GM12878 (cell line): ENCODE measurements at regions of chr6 and their contacts with region 1.

Region 1: DNA sequence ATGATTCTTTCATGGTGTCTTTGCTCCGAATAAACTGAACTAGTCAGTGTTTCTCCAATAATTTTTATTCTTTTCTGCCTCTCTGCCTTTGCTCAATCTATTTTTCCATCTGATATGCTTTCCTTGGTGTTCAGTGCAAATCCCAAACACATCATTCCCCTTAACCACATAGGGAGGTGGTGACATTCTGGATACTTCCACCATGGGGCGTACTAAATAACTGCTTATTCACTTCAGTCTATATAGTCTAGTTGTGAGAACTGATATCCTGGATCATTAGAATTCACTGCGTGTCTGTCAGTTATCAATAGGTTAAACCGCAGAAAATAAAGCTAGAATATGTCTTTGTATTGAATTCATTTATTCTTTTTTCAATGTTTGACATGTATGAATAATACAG is 83.1 kb downstream of the KCNQ5 start:
- DNase-seq: no peak
- ATAC-seq: no peak
- H3K4me3 ChIP-seq: no peak overlapping the region
- H3K27ac ChIP-seq: no peak overlapping the region
- H3K4me1 ChIP-seq: no peaks in the 10 kb centered on the region
- H3K27me3 ChIP-seq: no peaks in the 10 kb centered on the region
- CTCF ChIP-seq: no peak
- EP300 ChIP-seq: no peak
- POLR2A ChIP-seq: no peak
- RAD21 ChIP-seq: no peak

Region 2: GRCh38 chr6:72724545-72724944 is 19.6 kb after region 1 on chr6:
- CTCF ChIA-PET with region 1: interaction called, 4 read pairs
- POLR2A ChIA-PET with region 1: interaction called, 3 read pairs
- RAD21 ChIA-PET with region 1: interaction called, 4 read pairs
- SMC1A ChIA-PET with region 1: interaction called, 24 read pairs
- in situ Hi-C with region 1: no loop called
- intact Hi-C with region 1: no loop called
- DNase-seq: peak; percentile 58
- ATAC-seq: peak; percentile 99
- H3K4me3 ChIP-seq: no peak overlapping the region
- H3K27ac ChIP-seq: no peak overlapping the region
- H3K4me1 ChIP-seq: peaks cover 2% of the 10 kb centered on the region; the same call in 1 of the 2 replicates
- H3K27me3 ChIP-seq: no peaks in the 10 kb centered on the region
- CTCF ChIP-seq: no peak
- EP300 ChIP-seq: peak in 1 of 2 experiments; percentile 55; a peak in 2 of 4 replicates
- POLR2A ChIP-seq: no peak
- RAD21 ChIP-seq: no peak

Region 3: GRCh38 chr6:73329201-73329600 is 624.2 kb after region 1 on chr6:
- CTCF ChIA-PET with region 1: no interaction called
- POLR2A ChIA-PET with region 1: no interaction called
- RAD21 ChIA-PET with region 1: no interaction called
- SMC1A ChIA-PET with region 1: no interaction called
- in situ Hi-C with region 1: no loop called
- intact Hi-C with region 1: no loop called
- DNase-seq: no peak
- ATAC-seq: peak; percentile 69
- H3K4me3 ChIP-seq: no peak overlapping the region
- H3K27ac ChIP-seq: no peak overlapping the region
- H3K4me1 ChIP-seq: peaks cover 4% of the 10 kb centered on the region; the same call in 1 of the 2 replicates
- H3K27me3 ChIP-seq: no peaks in the 10 kb centered on the region
- CTCF ChIP-seq: no peak
- EP300 ChIP-seq: no peak
- POLR2A ChIP-seq: no peak
- RAD21 ChIP-seq: no peak